Right cardiac atrium (tissue), 5 donors: ENCODE measurements at regions of chr7 and their contacts with region 1.

Region 1: GRCh38 chr7:50560865-50561351 is 4.3 kb downstream of the DDC start:
- DNase-seq: no peak
- ATAC-seq: no peak
- H3K4me3 ChIP-seq: no peak overlapping the region
- H3K27ac ChIP-seq: no peak overlapping the region
- H3K4me1 ChIP-seq: no peaks in the 10 kb centered on the region
- H3K27me3 ChIP-seq: no peaks in the 10 kb centered on the region

Region 2: DNA sequence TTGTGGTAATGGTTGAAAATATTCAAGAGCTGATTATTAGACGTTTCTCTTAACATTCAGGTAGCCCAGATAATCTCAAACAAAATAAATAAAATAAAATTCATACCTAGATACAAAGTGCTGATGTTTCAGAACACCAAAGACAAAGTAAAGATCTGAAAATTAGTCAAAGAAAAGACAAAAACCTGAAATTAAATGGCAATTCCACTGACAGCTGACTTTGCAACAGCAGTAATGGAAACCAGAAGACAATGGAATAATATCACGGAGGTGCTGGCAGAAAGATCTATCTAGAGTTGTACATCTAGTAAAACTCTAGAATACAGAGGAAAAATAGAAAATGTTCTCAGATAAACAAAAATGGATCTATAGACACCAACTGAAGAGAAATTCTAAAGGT is 314.4 kb before region 1 on chr7:
- intact Hi-C with region 1: loop called in 1 of 4 experiments (anchors 10 kb)
- DNase-seq: no peak
- ATAC-seq: no peak
- H3K4me3 ChIP-seq: no peak overlapping the region
- H3K27ac ChIP-seq: no peak overlapping the region
- H3K4me1 ChIP-seq: no peaks in the 10 kb centered on the region
- H3K27me3 ChIP-seq: no peaks in the 10 kb centered on the region